Naive thymus-derived CD4-positive, alpha-beta T cell (primary cell): ENCODE measurements at regions of chr7 and their contacts with region 1.

Region 1: GRCh38 chr7:158809596-158809995 is 19.7 kb downstream of the ESYT2 start:
- DNase-seq: no peak
- ATAC-seq: peak; percentile 45
- H3K4me3 ChIP-seq: no peak overlapping the region
- H3K4me3 Mint-ChIP-seq: peak overlapping the region in 9 of 10 donors; percentile 51 to 87 (median 68)
- H3K27ac ChIP-seq: peak overlapping the region; percentile 8
- H3K27ac Mint-ChIP-seq: peak overlapping the region; percentile 84 to 99 (median 96)
- H3K4me1 ChIP-seq: peaks cover 25 to 49% of the 10 kb centered on the region in 2 donors
- H3K4me1 Mint-ChIP-seq: peaks cover 52 to 99% (median 79%) of the 10 kb centered on the region in 7 donors
- H3K27me3 ChIP-seq: no peaks in the 10 kb centered on the region
- H3K27me3 Mint-ChIP-seq: no peaks in the 10 kb centered on the region

Region 2: GRCh38 chr7:158774952-158775351 is 34.6 kb before region 1 on chr7:
- CTCF ChIA-PET with region 1: interaction called, 3 read pairs
- POLR2A ChIA-PET with region 1: interaction called, 13 read pairs
- intact Hi-C with region 1: loop called in 1 of 2 experiments (anchors 1 kb)
- DNase-seq: no peak
- ATAC-seq: no peak
- H3K4me3 ChIP-seq: no peak overlapping the region
- H3K4me3 Mint-ChIP-seq: peak overlapping the region in 8 of 10 donors; percentile 45 to 75 (median 62)
- H3K27ac ChIP-seq: peak overlapping the region; percentile 11
- H3K27ac Mint-ChIP-seq: peak overlapping the region in 7 of 9 donors; percentile 64 to 94 (median 81)
- H3K4me1 ChIP-seq: peaks cover 8 to 58% of the 10 kb centered on the region in 2 donors
- H3K4me1 Mint-ChIP-seq: peaks cover 0 to 52% (median 30%) of the 10 kb centered on the region in 7 donors
- H3K27me3 ChIP-seq: no peaks in the 10 kb centered on the region
- H3K27me3 Mint-ChIP-seq: no peaks in the 10 kb centered on the region

Region 3: GRCh38 chr7:158795272-158795671 is 14.3 kb before region 1 on chr7:
- CTCF ChIA-PET with region 1: interaction called, 5 read pairs
- POLR2A ChIA-PET with region 1: interaction called, 8 read pairs
- intact Hi-C with region 1: loop called in 1 of 2 experiments (anchors 2 kb)
- DNase-seq: no peak
- ATAC-seq: no peak
- H3K4me3 ChIP-seq: no peak overlapping the region
- H3K4me3 Mint-ChIP-seq: no peak overlapping the region
- H3K27ac ChIP-seq: no peak overlapping the region
- H3K27ac Mint-ChIP-seq: peak overlapping the region in 2 of 9 donors; percentile 21 to 63
- H3K4me1 ChIP-seq: peaks cover 0 to 3% of the 10 kb centered on the region in 2 donors
- H3K4me1 Mint-ChIP-seq: peaks cover 18 to 31% (median 19%) of the 10 kb centered on the region in 7 donors
- H3K27me3 ChIP-seq: no peaks in the 10 kb centered on the region
- H3K27me3 Mint-ChIP-seq: no peaks in the 10 kb centered on the region

Region 4: GRCh38 chr7:158824028-158824427 is 14.4 kb after region 1 on chr7:
- CTCF ChIA-PET with region 1: interaction called, 26 read pairs
- POLR2A ChIA-PET with region 1: interaction called, 67 read pairs
- intact Hi-C with region 1: loop called (anchors 1 kb)
- DNase-seq: peak in 7 of 9 donors; percentile 60 to 83 (median 75)
- ATAC-seq: peak; percentile 81
- H3K4me3 ChIP-seq: no peak overlapping the region
- H3K4me3 Mint-ChIP-seq: peak overlapping the region; percentile 45 to 97 (median 72)
- H3K27ac ChIP-seq: peak overlapping the region; percentile 58
- H3K27ac Mint-ChIP-seq: peak overlapping the region; percentile 78 to 99 (median 91)
- H3K4me1 ChIP-seq: peaks cover 50 to 59% of the 10 kb centered on the region in 2 donors
- H3K4me1 Mint-ChIP-seq: peaks cover 48 to 88% (median 65%) of the 10 kb centered on the region in 7 donors
- H3K27me3 ChIP-seq: no peaks in the 10 kb centered on the region
- H3K27me3 Mint-ChIP-seq: no peaks in the 10 kb centered on the region

Region 5: GRCh38 chr7:158856883-158857668 is 47.5 kb after region 1 on chr7:
- CTCF ChIA-PET with region 1: no interaction called
- POLR2A ChIA-PET with region 1: interaction called, 5 read pairs
- intact Hi-C with region 1: loop called (anchors 1 kb)
- DNase-seq: peak in 2 of 9 donors; percentile 15 to 17
- ATAC-seq: no peak
- H3K4me3 ChIP-seq: peak overlapping the region; percentile 77
- H3K4me3 Mint-ChIP-seq: peak overlapping the region; percentile 67 to 98 (median 94)
- H3K27ac ChIP-seq: peak overlapping the region; percentile 83
- H3K27ac Mint-ChIP-seq: peak overlapping the region in 8 of 9 donors; percentile 24 to 92 (median 84)
- H3K4me1 ChIP-seq: peaks cover 0 to 22% of the 10 kb centered on the region in 2 donors
- H3K4me1 Mint-ChIP-seq: peaks cover 15 to 46% (median 39%) of the 10 kb centered on the region in 7 donors
- H3K27me3 ChIP-seq: no peaks in the 10 kb centered on the region
- H3K27me3 Mint-ChIP-seq: peaks cover 0 to 4% (median 0%) of the 10 kb centered on the region in 5 donors